Posterior vena cava (tissue), 2 donors: ENCODE measurements at regions of chr22 and their contacts with region 1.

Region 1: GRCh38 chr22:39135090-39135896 is 17.2 kb downstream of the CBX7 start:
- DNase-seq: peak; percentile 80

Region 2: DNA sequence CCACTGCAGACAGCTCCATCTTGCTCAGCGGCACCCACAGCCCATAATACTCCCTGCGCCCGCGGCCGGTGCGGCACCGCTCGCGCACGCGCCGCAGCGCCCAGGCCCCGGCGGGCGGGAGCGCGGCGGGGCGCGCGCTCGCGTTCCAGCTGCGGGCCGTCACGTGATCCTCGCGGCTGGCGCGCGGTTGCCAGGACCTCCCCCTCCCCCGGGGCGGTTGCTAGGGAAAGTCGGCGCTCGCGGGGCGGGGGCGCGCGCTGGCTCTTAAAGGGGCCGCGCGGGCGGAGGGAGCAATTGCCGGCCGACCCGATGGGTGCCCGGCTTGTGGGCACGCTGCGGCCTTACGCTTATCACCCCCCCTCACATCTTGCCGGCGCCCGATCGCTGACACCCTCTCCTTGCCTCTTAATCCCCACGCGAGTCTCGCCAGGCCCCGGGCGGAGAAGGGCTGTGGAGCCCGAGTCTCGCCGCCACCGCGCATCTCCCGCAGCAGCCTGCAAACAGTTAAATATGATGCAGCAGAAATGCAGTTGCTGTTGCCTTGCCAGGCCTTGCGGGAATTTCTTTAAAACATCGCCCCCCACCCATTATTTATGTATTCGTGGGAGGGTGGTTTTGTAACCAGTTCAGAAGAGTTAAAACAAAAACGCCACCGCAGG is 263.0 kb before region 1 on chr22 and contains the start of gene CBX6:
- intact Hi-C with region 1: loop called in 1 of 2 experiments (anchors 10 kb)
- DNase-seq: peak; percentile 98
- total RNA-seq, gene CBX6: 98.0 to 105 TPM

Region 3: GRCh38 chr22:39205338-39206021 is 70.2 kb after region 1 on chr22:
- intact Hi-C with region 1: no loop called
- DNase-seq: peak; percentile 53